MCF 10A (cell line): ENCODE measurements at regions of chr12 and their contacts with region 1.

Region 1: GRCh38 chr12:117874842-117875434 is 93.9 kb downstream of the KSR2 start:
- DNase-seq: peak; percentile 66
- H3K4me3 Mint-ChIP-seq: no peak overlapping the region
- H3K27ac Mint-ChIP-seq: no peak overlapping the region
- H3K4me1 Mint-ChIP-seq: no peaks in the 10 kb centered on the region
- H3K27me3 Mint-ChIP-seq: peaks cover 7% of the 10 kb centered on the region
- CTCF ChIP-seq: peak; percentile 88

Region 2: DNA sequence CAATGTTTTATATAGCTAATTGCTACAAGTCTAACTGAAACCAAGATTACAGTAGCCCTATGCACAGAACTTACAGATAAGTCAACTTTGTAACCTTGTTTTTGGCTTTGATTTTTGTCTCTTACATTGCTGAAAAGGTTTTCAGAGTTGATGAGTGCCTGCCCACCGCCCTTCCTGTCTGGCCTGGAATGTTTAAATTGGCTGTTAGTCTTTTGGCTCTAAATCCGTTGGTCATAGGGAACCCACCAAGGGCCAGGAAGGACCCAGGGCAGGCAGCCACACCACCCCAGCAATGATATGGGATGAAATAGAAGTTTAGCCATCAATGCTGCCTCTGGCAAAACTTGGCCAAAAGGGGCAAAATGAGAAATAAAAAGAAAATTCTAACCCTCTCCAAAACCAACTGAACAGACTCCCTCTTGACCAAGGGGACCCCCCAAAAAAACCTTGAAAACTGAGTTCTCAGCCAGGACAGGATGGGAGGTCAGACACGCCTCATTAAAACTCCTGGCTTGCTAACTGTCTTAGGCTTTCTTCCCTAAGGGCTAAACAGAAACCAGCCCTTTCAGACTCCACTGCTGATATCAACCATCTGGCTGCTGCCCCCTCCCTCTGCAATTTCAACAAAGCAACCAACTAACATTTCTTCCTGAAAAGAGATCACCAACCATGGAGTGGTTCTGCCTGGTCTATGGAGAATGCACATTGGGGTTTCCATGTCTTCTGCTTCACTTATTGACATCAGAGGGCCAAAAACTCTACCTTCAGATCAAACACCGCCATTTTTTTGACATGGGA is 271.4 kb before region 1 on chr12:
- CTCF ChIA-PET with region 1: no interaction called
- POLR2A ChIA-PET with region 1: no interaction called
- intact Hi-C with region 1: no loop called
- DNase-seq: no peak
- H3K4me3 Mint-ChIP-seq: no peak overlapping the region
- H3K27ac Mint-ChIP-seq: no peak overlapping the region
- H3K4me1 Mint-ChIP-seq: no peaks in the 10 kb centered on the region
- H3K27me3 Mint-ChIP-seq: peaks cover 12% of the 10 kb centered on the region
- CTCF ChIP-seq: no peak

Region 3: DNA sequence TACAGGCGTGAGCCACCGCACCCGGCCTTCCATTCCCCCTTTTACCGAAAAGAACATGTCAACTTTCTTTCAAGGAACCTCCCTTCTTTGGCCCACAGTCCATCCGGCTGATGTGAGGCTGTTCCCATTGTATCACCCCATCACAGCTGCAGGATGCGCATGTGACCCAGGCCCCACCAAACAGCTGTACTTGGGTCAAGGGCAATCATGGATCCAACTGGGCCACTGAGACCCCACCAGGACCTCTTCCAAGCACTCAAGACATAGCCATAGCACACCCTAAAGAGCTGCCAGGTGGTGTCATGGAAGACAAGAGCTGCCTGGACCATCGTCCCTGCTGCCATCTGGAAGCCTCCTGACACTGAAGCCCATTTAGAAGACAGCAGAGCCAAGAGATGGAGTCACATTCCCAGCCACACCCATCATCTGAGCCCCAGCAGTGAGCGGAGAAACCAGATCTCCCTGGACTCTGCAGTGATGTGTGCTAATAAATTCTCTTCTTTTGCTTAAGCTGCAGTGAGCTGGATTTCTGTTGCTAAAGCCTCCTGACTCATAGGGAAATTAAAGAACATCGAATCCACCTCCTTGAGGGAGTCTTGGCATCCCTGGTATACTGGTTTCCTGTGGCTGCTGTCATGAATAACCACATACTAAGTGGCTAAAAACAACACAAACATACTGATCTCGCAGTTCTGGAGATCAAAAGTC is 11.8 kb before region 1 on chr12:
- CTCF ChIA-PET with region 1: interaction called, 20 read pairs
- POLR2A ChIA-PET with region 1: no interaction called
- intact Hi-C with region 1: no loop called
- DNase-seq: peak; percentile 67
- H3K4me3 Mint-ChIP-seq: no peak overlapping the region
- H3K27ac Mint-ChIP-seq: no peak overlapping the region
- H3K4me1 Mint-ChIP-seq: no peaks in the 10 kb centered on the region
- H3K27me3 Mint-ChIP-seq: no peaks in the 10 kb centered on the region
- CTCF ChIP-seq: no peak

Region 4: DNA sequence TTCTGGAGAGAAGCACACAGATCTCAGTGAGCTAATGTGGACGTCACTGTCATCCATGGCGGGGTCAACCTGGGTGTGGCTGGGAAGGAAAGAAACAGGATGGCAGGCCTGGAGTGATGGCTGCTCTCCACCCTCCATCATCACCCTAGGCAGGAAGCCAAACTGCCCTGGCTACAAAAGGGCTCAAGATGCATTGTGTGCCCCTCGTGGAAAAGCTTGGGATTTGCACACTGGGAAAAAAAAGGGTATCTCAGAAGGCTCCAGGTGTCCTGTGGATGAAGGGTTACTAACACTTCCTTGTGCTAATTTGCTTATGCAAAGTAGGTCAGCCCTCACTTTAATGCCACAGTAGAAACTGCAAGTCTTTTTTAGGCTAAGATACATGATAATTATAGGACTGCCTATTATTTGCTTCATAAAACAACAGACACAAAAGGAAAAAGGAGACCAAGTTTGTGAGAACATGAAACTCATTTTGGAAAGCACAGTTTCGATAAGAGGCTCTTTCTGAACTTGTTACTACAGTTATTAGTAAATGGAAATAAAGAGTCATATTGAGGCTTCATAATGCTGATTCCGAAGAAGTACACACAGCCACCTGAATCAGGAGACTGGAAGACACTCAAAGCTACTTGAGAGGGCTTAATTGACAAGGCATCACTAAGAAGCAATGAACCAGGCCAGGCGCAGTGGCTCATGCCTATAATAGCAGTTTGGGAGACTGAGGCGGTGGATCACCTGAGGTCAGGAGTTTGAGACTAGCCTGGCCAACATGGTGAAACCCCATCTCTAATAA is 160.5 kb after region 1 on chr12:
- CTCF ChIA-PET with region 1: interaction called, 56 read pairs
- POLR2A ChIA-PET with region 1: no interaction called
- intact Hi-C with region 1: loop called (anchors 1 kb)
- DNase-seq: no peak
- H3K4me3 Mint-ChIP-seq: no peak overlapping the region
- H3K27ac Mint-ChIP-seq: no peak overlapping the region
- H3K4me1 Mint-ChIP-seq: no peaks in the 10 kb centered on the region
- H3K27me3 Mint-ChIP-seq: no peaks in the 10 kb centered on the region
- CTCF ChIP-seq: no peak

Region 5: DNA sequence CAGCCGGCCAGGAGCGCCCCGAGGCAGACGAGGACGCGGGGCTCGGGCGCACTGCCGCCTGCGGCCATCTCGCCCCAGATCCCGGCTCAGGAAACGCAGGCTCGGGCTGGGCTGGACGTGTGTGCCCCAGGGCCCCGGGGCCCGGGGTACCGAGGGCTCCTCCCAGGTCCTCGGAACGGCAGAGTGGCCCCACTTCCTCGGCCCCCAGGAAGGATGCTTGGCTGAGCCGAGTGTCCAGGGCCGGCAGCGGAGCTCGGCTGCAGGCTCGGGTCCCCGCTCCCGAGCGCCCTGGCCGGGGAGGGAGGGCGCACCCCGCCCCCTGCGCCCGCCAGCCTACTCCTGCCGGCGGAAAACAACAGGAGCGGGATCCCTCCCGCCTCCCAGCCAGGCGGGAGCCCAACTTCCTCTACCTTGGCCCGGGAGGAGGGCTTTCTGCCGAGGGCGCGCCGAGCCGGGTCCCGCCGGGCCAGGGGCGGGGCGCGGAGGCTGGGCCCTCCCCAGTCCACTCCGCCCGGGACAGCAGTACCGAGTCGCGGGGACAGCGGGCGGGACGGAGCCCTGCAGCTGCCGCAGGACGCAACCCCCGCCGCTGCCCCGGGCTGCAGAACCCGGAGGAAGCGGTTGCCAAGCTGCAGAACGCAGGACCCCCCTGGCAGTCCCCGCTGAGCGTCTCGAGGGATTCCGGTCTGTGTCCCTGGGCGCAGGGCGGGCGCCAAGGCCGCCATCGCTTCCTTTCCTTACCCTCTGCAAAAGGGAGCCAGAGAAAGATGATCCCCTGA is 228.9 kb after region 1 on chr12 and contains the start of gene VSIG10:
- CTCF ChIA-PET with region 1: interaction called, 6 read pairs
- POLR2A ChIA-PET with region 1: interaction called, 3 read pairs
- intact Hi-C with region 1: loop called (anchors 10 kb)
- DNase-seq: peak; percentile 52
- H3K4me3 Mint-ChIP-seq: peak within 1 kb of the TSS; percentile 80
- H3K27ac Mint-ChIP-seq: no peak within 1 kb of the TSS
- H3K4me1 Mint-ChIP-seq: peaks cover 12% of the 10 kb centered on the region
- H3K27me3 Mint-ChIP-seq: no peaks in the 10 kb centered on the region
- CTCF ChIP-seq: no peak
- total RNA-seq, gene VSIG10: 10.9 and 17.3 TPM in 2 replicates

Region 6: DNA sequence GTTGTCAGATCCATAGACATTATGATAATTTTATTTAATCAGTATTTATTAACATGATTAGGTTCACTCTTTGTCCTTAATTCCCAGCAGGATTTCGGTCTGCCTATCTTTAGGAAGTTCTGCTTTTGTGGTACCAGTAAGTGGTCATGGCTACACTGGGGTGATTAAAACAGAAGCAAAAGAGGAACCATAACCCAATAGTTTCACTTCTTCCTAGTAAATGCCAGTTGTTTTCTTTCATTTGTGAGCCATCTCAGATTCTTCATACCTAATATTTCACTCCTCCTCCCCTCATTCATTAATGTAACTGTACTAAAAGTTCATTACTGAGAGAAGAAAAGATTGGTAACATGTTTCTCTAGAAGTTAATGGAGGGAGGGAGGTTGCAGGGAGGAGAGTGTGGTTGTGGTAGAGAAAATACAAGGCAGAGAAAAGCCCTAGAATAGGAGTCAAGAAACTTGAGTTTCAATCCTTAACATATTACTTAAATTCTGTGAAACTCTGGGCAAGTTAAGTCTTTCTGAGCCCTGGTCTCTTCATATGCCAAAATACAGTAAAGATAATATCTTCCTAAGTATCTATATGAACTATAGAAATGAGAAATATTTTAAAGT is 362.2 kb after region 1 on chr12:
- CTCF ChIA-PET with region 1: no interaction called
- POLR2A ChIA-PET with region 1: no interaction called
- intact Hi-C with region 1: no loop called
- DNase-seq: no peak
- H3K4me3 Mint-ChIP-seq: no peak overlapping the region
- H3K27ac Mint-ChIP-seq: peak overlapping the region; percentile 84
- H3K4me1 Mint-ChIP-seq: peaks cover 16% of the 10 kb centered on the region
- H3K27me3 Mint-ChIP-seq: no peaks in the 10 kb centered on the region
- CTCF ChIP-seq: no peak